Left ventricle myocardium inferior (tissue), 1 donor: ENCODE measurements at regions of chr13 and their contacts with region 1.

Region 1: DNA sequence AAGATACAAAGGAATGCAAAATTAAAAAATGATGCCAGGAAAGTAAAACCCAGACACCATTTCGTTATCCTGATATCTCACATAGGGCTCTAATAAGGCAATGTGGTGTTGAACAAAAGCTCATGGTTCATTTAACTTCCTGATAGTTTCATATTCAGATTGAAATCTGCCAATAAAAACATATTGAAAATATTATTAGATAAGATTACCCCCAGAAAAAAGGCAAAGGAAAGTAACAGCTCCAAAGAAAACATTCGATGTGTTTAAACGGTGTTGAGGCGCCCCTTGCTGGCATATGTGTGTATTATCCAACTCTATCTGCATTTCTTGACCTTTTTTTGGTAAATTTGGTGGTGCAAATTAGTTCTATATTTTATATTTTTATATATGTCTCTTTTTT is 75.9 kb downstream of the ESD start:
- DNase-seq: peak; percentile 19
- H3K4me3 ChIP-seq: no peak overlapping the region
- H3K27ac ChIP-seq: no peak overlapping the region
- H3K4me1 ChIP-seq: peaks cover 10% of the 10 kb centered on the region
- H3K27me3 ChIP-seq: no peaks in the 10 kb centered on the region
- CTCF ChIP-seq: peak; percentile 79

Region 2: DNA sequence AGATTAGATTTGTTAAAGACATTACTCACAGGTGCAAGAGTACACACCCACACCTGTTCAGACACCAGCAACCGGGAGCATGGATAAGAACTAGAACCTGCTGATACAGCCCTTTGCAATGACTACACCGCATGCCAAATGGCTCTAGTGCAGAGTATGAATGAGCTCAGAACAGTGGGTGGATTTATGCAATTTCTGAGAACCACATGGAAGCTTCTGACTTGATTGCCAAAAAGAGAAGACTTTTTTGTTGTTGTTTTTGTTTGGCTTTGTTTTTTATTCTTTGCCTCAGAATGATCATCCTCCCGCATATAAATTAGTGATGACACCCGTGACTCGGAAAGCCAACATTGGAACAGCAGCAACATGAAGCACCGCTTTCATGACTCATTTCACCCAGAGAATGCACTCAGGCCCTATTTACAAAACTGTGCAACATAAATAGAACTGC is 245.5 kb before region 1 on chr13:
- intact Hi-C with region 1: no loop called
- DNase-seq: no peak
- H3K4me3 ChIP-seq: no peak overlapping the region
- H3K27ac ChIP-seq: no peak overlapping the region
- H3K4me1 ChIP-seq: no peaks in the 10 kb centered on the region
- H3K27me3 ChIP-seq: no peaks in the 10 kb centered on the region
- CTCF ChIP-seq: no peak

Region 3: GRCh38 chr13:46492946-46493345 is 228.1 kb before region 1 on chr13:
- intact Hi-C with region 1: loop called (anchors 5 kb)
- DNase-seq: no peak
- H3K4me3 ChIP-seq: no peak overlapping the region
- H3K27ac ChIP-seq: no peak overlapping the region
- H3K4me1 ChIP-seq: peaks cover 4% of the 10 kb centered on the region
- H3K27me3 ChIP-seq: peaks cover 4% of the 10 kb centered on the region
- CTCF ChIP-seq: peak; percentile 73